ENCODE measurements at regions of chr2 and their contacts with region 1.

Region 1: GRCh38 chr2:43226558-43226954 is at the start of gene ZFP36L2:
- DNase-seq: peak; percentile 98
- ATAC-seq: peak; percentile 80 to 84
- total RNA-seq, gene ZFP36L2: 64.0 to 82.1 TPM

Region 2: GRCh38 chr2:42828487-42829425 is 397.8 kb before region 1 on chr2:
- intact Hi-C with region 1: loop called in 1 of 2 experiments (anchors 2 kb)
- DNase-seq: peak; percentile 80
- ATAC-seq: peak; percentile 92 to 94

Region 3: GRCh38 chr2:42944779-42945415 is 281.7 kb before region 1 on chr2:
- intact Hi-C with region 1: loop called in 1 of 2 experiments (anchors 2 kb)
- DNase-seq: no peak
- ATAC-seq: no peak

Region 4: GRCh38 chr2:43024515-43025011 is 202.0 kb before region 1 on chr2:
- intact Hi-C with region 1: loop called in 1 of 2 experiments (anchors 5 kb)
- DNase-seq: peak; percentile 73
- ATAC-seq: peak; percentile 71 to 79

Region 5: GRCh38 chr2:43484323-43484930 is 257.9 kb after region 1 on chr2:
- intact Hi-C with region 1: loop called (anchors 2 to 5 kb)
- DNase-seq: no peak
- ATAC-seq: peak; percentile 65 to 76

Measured in left cardiac atrium (tissue), 4 donors.